PC-3 (cell line): ENCODE measurements at regions of chr5 and their contacts with region 1.

Region 1: GRCh38 chr5:65290677-65291076 is 191.0 kb downstream of the ADAMTS6 start:
- DNase-seq: no peak
- ATAC-seq: no peak
- H3K4me3 ChIP-seq: no peak overlapping the region
- H3K27ac ChIP-seq: no peak overlapping the region
- H3K4me1 ChIP-seq: no peaks in the 10 kb centered on the region
- H3K27me3 ChIP-seq: no peaks in the 10 kb centered on the region
- CTCF ChIP-seq: no peak

Region 2: GRCh38 chr5:65229841-65230240 is 60.8 kb before region 1 on chr5:
- CTCF ChIA-PET with region 1: no interaction called
- POLR2A ChIA-PET with region 1: interaction called, 10 read pairs
- intact Hi-C with region 1: no loop called
- DNase-seq: no peak
- ATAC-seq: no peak
- H3K4me3 ChIP-seq: no peak overlapping the region
- H3K27ac ChIP-seq: no peak overlapping the region
- H3K4me1 ChIP-seq: no peaks in the 10 kb centered on the region
- H3K27me3 ChIP-seq: no peaks in the 10 kb centered on the region
- CTCF ChIP-seq: no peak

Region 3: DNA sequence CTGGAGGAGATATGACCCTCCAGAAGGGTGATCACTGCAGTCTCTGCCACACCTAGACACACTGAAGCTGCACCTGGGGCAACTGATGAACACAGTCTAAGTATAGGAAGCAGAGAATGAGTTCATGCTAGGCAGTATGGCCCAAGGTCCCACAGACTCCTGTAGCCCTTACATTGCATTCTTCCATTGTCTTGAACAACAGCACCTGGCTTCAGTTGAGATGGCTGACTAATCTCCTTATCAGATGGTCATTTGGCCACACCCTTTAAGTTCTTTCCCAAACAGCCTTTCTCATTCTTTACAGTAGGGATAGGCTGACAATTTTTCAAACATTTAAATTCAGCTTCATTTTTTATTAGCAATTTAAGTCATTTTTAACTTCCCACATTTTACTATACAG is 249.2 kb after region 1 on chr5:
- CTCF ChIA-PET with region 1: no interaction called
- POLR2A ChIA-PET with region 1: no interaction called
- intact Hi-C with region 1: no loop called
- DNase-seq: peak; percentile 30
- ATAC-seq: peak; percentile 49
- H3K4me3 ChIP-seq: no peak overlapping the region
- H3K27ac ChIP-seq: no peak overlapping the region
- H3K4me1 ChIP-seq: no peaks in the 10 kb centered on the region
- H3K27me3 ChIP-seq: no peaks in the 10 kb centered on the region
- CTCF ChIP-seq: no peak